CD8-positive, alpha-beta T cell (primary cell): ENCODE measurements at regions of chr20 and their contacts with region 1.

Region 1: GRCh38 chr20:53578492-53579222 is 15.0 kb downstream of the ZNF217 start:
- DNase-seq: peak in 8 of 9 experiments; percentile 39 to 92 (median 63)
- ATAC-seq: peak; percentile 32
- H3K4me3 ChIP-seq: peak overlapping the region; percentile 50 to 58
- H3K4me3 Mint-ChIP-seq: peak overlapping the region; percentile 87
- H3K27ac ChIP-seq: peak overlapping the region; percentile 46 to 83
- H3K27ac Mint-ChIP-seq: peak overlapping the region; percentile 94
- H3K4me1 ChIP-seq: peaks cover 86% of the 10 kb centered on the region
- H3K4me1 Mint-ChIP-seq: peaks cover 89% of the 10 kb centered on the region
- H3K27me3 ChIP-seq: no peaks in the 10 kb centered on the region
- H3K27me3 Mint-ChIP-seq: no peaks in the 10 kb centered on the region
- CTCF ChIP-seq: peak; percentile 95

Region 2: DNA sequence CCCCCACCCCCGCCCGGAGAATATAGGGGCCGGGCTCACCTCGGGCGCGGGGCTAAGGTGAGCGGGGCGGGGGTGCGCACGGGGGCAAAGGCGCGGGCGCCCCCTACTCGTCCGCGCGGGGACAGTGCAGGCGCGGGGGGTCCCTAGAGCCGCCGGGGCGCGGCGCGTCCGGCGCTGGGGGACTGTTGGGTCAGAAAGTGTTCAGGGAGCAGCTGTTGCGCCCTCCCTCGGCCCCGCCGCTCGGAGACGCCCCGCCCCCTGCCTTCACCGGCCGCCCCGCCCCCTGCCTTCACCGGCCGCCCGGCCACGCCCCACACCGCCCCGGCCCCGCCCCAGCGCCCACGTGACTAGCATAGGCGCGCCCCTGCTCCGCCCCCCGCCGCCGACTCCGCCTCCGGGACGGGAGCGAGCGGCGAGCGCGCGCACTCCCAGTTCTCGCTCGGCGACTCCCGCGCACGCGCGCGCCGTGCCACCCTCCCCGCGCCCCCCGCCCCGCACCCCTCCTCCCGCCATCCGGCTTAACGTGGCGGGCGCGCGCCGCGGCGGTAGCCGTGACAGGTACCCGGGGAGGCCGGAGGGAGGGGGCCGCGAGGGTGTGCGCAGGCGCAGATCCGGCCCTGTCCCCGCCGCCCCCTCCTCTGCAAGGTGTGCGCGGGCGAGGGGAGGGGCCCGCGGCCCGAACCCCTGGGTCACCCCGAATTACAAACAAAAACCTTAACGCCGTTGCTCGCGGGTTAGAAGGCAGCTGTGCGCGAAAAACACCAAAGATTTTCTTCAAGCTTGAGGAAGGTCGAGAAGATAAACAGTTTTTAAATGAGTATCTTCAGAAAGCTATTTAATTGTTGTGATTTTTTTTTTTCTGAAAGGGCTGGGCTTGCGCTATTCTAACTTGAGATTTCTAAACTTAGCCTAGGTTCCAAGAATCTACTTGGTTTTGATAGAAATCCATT is 15.7 kb after region 1 on chr20:
- CTCF ChIA-PET with region 1: interaction called, 4 read pairs
- POLR2A ChIA-PET with region 1: interaction called, 8 read pairs
- intact Hi-C with region 1: loop called (anchors 1 to 2 kb)
- DNase-seq: peak; percentile 94 to 100 (median 98)
- ATAC-seq: peak; percentile 74
- H3K4me3 ChIP-seq: peak overlapping the region; percentile 67 to 83
- H3K4me3 Mint-ChIP-seq: peak overlapping the region; percentile 82
- H3K27ac ChIP-seq: peak overlapping the region; percentile 84 to 87
- H3K27ac Mint-ChIP-seq: peak overlapping the region; percentile 92
- H3K4me1 ChIP-seq: peaks cover 42% of the 10 kb centered on the region
- H3K4me1 Mint-ChIP-seq: peaks cover 59% of the 10 kb centered on the region
- H3K27me3 ChIP-seq: no peaks in the 10 kb centered on the region
- H3K27me3 Mint-ChIP-seq: no peaks in the 10 kb centered on the region
- CTCF ChIP-seq: no peak

Region 3: DNA sequence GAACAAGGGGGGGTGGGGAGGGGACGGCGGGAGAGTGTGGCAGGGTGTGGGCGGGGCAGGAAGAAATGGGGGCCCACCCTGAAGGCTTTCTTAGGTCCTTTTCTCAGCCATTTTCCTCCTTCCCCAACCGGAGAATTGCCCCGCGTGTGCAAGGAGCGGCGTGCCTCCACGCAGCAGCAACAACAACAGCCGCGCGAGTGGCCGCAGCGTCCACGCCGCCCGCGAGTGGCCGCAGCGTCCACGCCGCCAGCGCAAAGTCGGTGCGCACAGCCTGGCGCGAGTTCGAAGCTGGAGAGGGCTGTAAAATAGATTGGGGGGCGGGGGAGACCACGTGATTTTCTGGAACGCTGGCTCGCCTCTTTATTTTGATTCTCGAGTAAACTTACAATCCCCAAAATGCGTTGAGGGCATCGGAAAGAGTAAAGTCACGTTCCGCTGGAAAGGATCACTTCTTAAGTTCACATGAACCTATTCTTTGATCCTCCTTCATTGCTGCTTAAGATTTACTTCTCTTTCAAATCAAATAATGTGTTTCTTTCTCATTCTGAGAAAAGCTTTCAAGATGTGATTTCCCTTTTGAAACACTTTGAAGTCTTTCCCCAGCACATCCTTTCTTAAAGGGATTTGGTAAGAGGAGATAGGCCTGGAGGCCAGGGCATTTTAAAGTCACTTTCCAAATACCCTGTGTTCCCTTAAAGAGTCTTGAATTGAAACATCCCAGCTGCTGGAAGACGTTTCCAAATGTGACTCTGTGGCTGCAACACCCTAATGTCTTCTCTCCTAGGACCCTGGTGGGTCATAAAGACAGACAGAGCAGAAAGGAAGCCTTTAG is 81.6 kb after region 1 on chr20:
- CTCF ChIA-PET with region 1: interaction called, 8 read pairs
- POLR2A ChIA-PET with region 1: no interaction called
- intact Hi-C with region 1: loop called (anchors 5 kb)
- DNase-seq: peak in 6 of 9 experiments; percentile 10 to 68 (median 44)
- ATAC-seq: peak; percentile 47
- H3K4me3 ChIP-seq: peak overlapping the region; percentile 45 to 61
- H3K4me3 Mint-ChIP-seq: peak overlapping the region; percentile 87
- H3K27ac ChIP-seq: peak overlapping the region; percentile 49 to 67
- H3K27ac Mint-ChIP-seq: peak overlapping the region; percentile 94
- H3K4me1 ChIP-seq: peaks cover 53% of the 10 kb centered on the region
- H3K4me1 Mint-ChIP-seq: peaks cover 62% of the 10 kb centered on the region
- H3K27me3 ChIP-seq: no peaks in the 10 kb centered on the region
- H3K27me3 Mint-ChIP-seq: no peaks in the 10 kb centered on the region
- CTCF ChIP-seq: no peak

Region 4: DNA sequence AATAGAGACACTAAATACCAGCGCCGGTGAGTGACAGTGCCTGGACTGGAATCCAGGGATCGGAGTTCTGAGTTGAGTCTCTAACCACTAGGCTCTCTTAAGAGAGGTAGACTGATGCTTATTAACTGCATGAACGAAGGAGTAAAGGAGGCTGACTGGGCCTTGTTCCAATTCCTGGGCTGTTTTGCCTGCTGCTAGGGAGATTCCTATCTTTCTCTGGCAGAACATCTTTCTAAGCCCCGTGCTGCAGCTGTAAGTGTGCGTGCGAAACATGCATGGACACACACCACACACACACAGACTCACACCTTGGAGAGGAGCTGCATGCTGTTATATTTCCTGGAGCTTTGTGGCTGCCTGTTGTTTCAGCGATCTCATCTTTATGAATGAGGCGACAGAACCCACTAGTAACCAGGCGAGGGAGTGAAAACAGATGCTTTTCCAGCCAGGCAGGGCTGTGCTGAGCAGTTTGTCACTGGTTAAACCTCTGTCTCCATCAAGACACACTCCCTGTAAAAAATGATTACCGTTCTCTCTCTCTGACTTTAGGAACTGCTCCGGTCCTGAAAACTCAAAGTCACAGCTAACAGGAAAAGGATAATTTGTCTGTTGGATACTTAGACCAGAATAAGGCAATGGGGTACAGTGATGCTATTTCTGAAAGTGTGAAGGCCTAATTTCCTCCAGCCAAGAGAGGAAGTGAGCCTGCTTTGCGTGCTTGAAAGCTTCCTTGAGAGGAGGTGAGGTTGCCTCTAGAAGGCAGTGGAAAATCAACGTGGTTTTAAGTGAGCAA is 172.4 kb after region 1 on chr20:
- CTCF ChIA-PET with region 1: interaction called, 7 read pairs
- POLR2A ChIA-PET with region 1: interaction called, 4 read pairs
- intact Hi-C with region 1: loop called (anchors 2 to 5 kb)
- DNase-seq: peak in 8 of 9 experiments; percentile 6 to 79 (median 38)
- ATAC-seq: peak; percentile 56
- H3K4me3 ChIP-seq: no peak overlapping the region
- H3K4me3 Mint-ChIP-seq: peak overlapping the region; percentile 56
- H3K27ac ChIP-seq: peak overlapping the region; percentile 13 to 77
- H3K27ac Mint-ChIP-seq: peak overlapping the region; percentile 92
- H3K4me1 ChIP-seq: peaks cover 68% of the 10 kb centered on the region
- H3K4me1 Mint-ChIP-seq: peaks cover 70% of the 10 kb centered on the region
- H3K27me3 ChIP-seq: no peaks in the 10 kb centered on the region
- H3K27me3 Mint-ChIP-seq: no peaks in the 10 kb centered on the region
- CTCF ChIP-seq: no peak

Region 5: DNA sequence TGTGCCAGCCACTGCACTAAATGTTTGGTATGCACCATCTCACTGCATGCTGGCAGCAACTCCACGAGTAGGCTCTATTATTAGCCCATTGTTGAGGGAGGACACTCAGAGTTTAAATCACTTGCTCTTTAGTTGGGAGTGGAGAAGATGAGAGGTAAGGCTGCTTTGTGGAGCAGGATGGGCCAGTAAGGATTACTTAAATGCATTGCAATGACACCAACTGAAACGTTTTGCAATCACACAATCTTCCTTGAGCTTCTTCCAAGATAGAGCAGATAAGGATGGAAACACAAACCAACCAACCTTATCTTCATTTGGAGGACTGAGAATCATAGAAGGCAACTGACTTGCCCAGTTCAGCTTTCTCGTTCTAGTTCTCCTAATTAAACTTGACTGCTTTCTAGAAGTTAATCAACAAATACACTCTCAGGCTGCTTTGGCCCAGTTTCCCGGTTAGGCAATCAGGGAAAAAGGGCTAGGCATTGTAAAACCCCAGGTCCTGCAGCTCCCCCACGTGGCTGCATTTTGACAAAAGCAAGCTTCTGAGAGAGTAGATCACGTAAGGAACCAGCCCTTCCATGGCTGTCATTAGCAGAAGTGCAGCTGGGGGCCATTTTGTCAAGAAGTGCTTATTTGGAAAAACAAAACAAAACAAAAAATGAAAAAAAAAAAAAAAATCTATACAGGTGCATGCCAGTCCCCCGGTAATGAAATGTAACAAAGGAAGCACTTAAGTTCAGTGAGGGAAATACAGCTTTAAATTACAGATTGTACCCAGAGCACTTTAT is 361.1 kb after region 1 on chr20:
- CTCF ChIA-PET with region 1: interaction called, 26 read pairs
- POLR2A ChIA-PET with region 1: interaction called, 3 read pairs
- intact Hi-C with region 1: loop called (anchors 1 kb)
- DNase-seq: peak; percentile 38 to 83 (median 67)
- ATAC-seq: peak; percentile 76
- H3K4me3 ChIP-seq: no peak overlapping the region
- H3K4me3 Mint-ChIP-seq: no peak overlapping the region
- H3K27ac ChIP-seq: no peak overlapping the region
- H3K27ac Mint-ChIP-seq: no peak overlapping the region
- H3K4me1 ChIP-seq: peaks cover 31% of the 10 kb centered on the region
- H3K4me1 Mint-ChIP-seq: peaks cover 43% of the 10 kb centered on the region
- H3K27me3 ChIP-seq: no peaks in the 10 kb centered on the region
- H3K27me3 Mint-ChIP-seq: no peaks in the 10 kb centered on the region
- CTCF ChIP-seq: peak; percentile 75

Region 6: DNA sequence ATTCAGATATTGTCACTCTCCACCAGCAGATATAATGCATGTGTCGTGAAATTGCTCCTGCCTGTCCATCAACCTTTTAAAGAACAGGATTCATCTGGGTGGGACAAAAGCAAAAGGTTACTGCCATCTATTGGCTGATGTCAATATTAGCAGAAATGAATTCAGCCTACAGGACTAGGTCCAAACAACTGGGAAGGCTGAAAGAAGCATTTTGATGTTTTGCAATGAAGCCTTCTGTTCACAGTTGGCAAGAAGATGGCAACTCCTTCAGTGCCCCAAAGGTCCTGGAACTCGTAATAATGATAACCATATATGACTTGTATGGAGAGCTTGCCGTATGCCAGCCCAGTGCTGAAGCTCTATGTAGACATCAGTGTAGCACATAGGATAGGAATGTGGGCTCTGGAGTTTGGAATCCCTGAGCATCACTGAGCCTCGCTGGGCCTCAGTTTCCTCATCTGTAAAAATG is 484.2 kb after region 1 on chr20:
- CTCF ChIA-PET with region 1: interaction called, 4 read pairs
- POLR2A ChIA-PET with region 1: no interaction called
- intact Hi-C with region 1: loop called in 1 of 2 experiments (anchors 2 kb)
- DNase-seq: peak in 2 of 9 experiments; percentile 40 to 60
- ATAC-seq: no peak
- H3K4me3 ChIP-seq: no peak overlapping the region
- H3K4me3 Mint-ChIP-seq: no peak overlapping the region
- H3K27ac ChIP-seq: no peak overlapping the region
- H3K27ac Mint-ChIP-seq: no peak overlapping the region
- H3K4me1 ChIP-seq: peaks cover 24% of the 10 kb centered on the region
- H3K4me1 Mint-ChIP-seq: no peaks in the 10 kb centered on the region
- H3K27me3 ChIP-seq: no peaks in the 10 kb centered on the region
- H3K27me3 Mint-ChIP-seq: no peaks in the 10 kb centered on the region
- CTCF ChIP-seq: peak; percentile 53